ENCODE measurements at regions of chr2 and their contacts with region 1.

Region 1: GRCh38 chr2:216666461-216667233 is 28.7 kb downstream of the IGFBP5 start:
- DNase-seq: peak in 1 of 2 donors; percentile 85
- H3K4me3 ChIP-seq: no peak overlapping the region
- H3K27ac ChIP-seq: peak overlapping the region; percentile 35 to 59
- H3K4me1 ChIP-seq: peaks cover 0 to 16% of the 10 kb centered on the region in 2 donors
- H3K27me3 ChIP-seq: no peaks in the 10 kb centered on the region
- CTCF ChIP-seq: peak; percentile 97 to 99 (median 98)

Region 2: GRCh38 chr2:216519154-216519762 is 147.4 kb before region 1 on chr2:
- intact Hi-C with region 1: loop called (anchors 1 kb)
- DNase-seq: peak in 1 of 2 donors; percentile 90
- H3K4me3 ChIP-seq: no peak overlapping the region
- H3K27ac ChIP-seq: peak overlapping the region; percentile 40 to 52
- H3K4me1 ChIP-seq: peaks cover 0 to 10% of the 10 kb centered on the region in 2 donors
- H3K27me3 ChIP-seq: no peaks in the 10 kb centered on the region
- CTCF ChIP-seq: peak; percentile 71 to 83 (median 79)

Region 3: DNA sequence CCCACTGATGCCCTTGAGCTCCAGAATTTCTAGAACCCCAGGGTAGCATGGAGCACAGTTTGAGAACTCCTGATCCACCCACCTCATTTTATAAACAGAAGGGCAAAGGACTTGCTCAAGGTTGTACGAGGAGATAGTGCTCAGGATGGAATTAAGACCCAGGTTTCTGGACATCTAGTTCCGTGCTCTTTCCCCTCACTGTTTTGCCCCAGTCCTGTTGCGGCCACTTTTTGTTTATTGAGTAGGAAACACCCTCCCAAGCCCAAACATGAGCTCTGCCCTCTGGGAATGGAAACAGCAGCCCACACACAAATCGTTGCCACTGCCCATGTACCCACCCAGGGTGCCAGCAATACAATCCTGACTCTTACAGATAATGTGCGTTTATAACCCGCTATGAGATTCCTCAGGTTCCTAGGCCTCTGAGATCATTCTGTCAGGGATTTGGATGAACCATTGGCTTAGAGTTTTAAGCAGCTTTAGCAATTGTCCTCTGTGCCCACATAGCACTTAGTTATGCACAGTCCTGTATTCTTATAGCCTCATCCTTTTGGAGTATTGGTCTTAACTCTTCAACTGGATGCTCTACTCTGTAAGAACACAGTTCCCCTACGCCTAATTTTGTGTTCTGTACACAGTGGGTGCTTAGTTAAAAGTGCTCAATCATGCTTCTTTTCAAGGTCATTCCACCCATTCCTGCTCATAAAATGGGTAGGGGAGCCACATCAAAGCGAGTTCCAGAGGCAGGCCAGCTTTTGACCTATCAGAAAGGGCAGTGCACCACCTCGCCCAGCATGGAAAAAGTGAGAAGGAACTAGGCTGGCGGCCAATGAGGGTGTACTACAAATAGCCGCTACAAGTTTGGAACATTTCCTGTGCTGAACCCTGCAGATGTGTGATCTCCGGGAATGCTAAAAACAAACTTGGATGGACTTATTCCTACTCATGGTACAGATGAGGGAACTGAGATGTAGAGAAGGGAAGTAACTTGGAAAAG is 93.8 kb before region 1 on chr2:
- intact Hi-C with region 1: loop called (anchors 5 kb)
- DNase-seq: peak; percentile 71 to 98
- H3K4me3 ChIP-seq: no peak overlapping the region
- H3K27ac ChIP-seq: peak overlapping the region; percentile 91 to 94
- H3K4me1 ChIP-seq: peaks cover 4 to 27% of the 10 kb centered on the region in 2 donors
- H3K27me3 ChIP-seq: no peaks in the 10 kb centered on the region
- CTCF ChIP-seq: no peak

Region 4: GRCh38 chr2:216632952-216633615 is 33.6 kb before region 1 on chr2 and contains the start of gene IGFBP2:
- intact Hi-C with region 1: loop called (anchors 2 kb)
- DNase-seq: peak in 1 of 2 donors; percentile 77
- H3K4me3 ChIP-seq: peak within 1 kb of the TSS; percentile 81 to 96
- H3K27ac ChIP-seq: peak within 1 kb of the TSS; percentile 80 to 88
- H3K4me1 ChIP-seq: peaks cover 0 to 13% of the 10 kb centered on the region in 2 donors
- H3K27me3 ChIP-seq: no peaks in the 10 kb centered on the region
- CTCF ChIP-seq: no peak
- total RNA-seq, gene IGFBP2: 1,691 TPM